ENCODE measurements at regions of chr1 and their contacts with region 1.

Region 1: DNA sequence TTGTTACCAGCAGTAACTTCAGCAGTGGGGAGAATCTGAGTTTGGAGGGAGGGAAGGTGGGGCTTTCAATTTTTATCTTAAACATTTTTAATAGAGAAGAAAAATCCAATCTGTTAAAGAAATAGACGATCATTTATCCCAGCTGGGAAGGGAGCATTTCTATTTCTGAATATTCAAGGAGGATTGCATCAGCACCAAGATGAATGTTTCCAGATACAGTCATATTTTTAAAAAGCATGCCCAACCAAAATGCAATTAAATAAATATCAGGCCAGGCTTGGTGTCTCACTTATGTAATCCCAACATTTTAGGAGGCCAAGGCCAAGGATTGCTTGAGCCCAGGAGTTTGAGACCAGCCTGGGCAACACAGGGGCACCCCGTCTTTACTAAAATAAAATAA is 1.7 kb upstream of the ATP1A4 start:
- DNase-seq: no peak
- H3K4me3 ChIP-seq: no peak overlapping the region
- H3K27ac ChIP-seq: no peak overlapping the region
- H3K4me1 ChIP-seq: peaks cover 0 to 8% (median 0%) of the 10 kb centered on the region in 4 donors
- H3K27me3 ChIP-seq: no peaks in the 10 kb centered on the region
- CTCF ChIP-seq: no peak
- EP300 ChIP-seq: no peak
- POLR2A ChIP-seq: no peak

Region 2: DNA sequence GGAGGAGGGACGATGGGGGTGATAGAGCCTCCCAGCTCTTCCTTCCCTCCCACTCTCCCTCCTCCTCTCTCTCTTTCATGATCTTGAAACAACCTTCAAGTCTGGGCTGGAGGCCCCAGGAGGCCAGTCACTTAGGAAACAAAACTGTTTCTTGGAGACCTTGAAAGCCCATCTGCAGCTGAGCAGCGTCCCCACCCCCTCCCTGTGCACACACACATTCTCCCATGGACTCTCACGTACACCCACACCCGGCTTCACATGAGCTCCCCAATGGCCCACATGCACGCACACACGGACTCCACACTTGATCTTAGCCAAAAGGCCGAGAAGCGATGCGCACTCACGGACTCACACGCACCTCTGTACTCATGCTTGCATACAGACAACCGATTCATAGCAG is 37.4 kb before region 1 on chr1:
- intact Hi-C with region 1: loop called (anchors 5 kb)
- DNase-seq: no peak
- H3K4me3 ChIP-seq: no peak overlapping the region
- H3K27ac ChIP-seq: peak overlapping the region; percentile 6 to 95 (median 62)
- H3K4me1 ChIP-seq: peaks cover 28 to 69% (median 56%) of the 10 kb centered on the region in 4 donors
- H3K27me3 ChIP-seq: peaks cover 0 to 4% (median 0%) of the 10 kb centered on the region in 4 donors
- CTCF ChIP-seq: no peak
- EP300 ChIP-seq: no peak
- POLR2A ChIP-seq: no peak